ENCODE measurements at regions of chr15 and their contacts with region 1.

Region 1: GRCh38 chr15:42920519-42921227 is at the start of gene TTBK2:
- DNase-seq: peak; percentile 99
- H3K4me3 ChIP-seq: peak within 1 kb of the TSS; percentile 81
- H3K27ac ChIP-seq: peak within 1 kb of the TSS; percentile 47
- H3K4me1 ChIP-seq: peaks cover 6% of the 10 kb centered on the region
- H3K27me3 ChIP-seq: no peaks in the 10 kb centered on the region
- CTCF ChIP-seq: no peak
- total RNA-seq, gene TTBK2: 14.9 and 15.8 TPM in 2 replicates

Region 2: GRCh38 chr15:42772144-42772543 is 148.5 kb before region 1 on chr15:
- CTCF ChIA-PET with region 1: no interaction called
- POLR2A ChIA-PET with region 1: no interaction called
- intact Hi-C with region 1: no loop called
- DNase-seq: no peak
- H3K4me3 ChIP-seq: no peak overlapping the region
- H3K27ac ChIP-seq: no peak overlapping the region
- H3K4me1 ChIP-seq: no peaks in the 10 kb centered on the region
- H3K27me3 ChIP-seq: no peaks in the 10 kb centered on the region
- CTCF ChIP-seq: no peak

Region 3: DNA sequence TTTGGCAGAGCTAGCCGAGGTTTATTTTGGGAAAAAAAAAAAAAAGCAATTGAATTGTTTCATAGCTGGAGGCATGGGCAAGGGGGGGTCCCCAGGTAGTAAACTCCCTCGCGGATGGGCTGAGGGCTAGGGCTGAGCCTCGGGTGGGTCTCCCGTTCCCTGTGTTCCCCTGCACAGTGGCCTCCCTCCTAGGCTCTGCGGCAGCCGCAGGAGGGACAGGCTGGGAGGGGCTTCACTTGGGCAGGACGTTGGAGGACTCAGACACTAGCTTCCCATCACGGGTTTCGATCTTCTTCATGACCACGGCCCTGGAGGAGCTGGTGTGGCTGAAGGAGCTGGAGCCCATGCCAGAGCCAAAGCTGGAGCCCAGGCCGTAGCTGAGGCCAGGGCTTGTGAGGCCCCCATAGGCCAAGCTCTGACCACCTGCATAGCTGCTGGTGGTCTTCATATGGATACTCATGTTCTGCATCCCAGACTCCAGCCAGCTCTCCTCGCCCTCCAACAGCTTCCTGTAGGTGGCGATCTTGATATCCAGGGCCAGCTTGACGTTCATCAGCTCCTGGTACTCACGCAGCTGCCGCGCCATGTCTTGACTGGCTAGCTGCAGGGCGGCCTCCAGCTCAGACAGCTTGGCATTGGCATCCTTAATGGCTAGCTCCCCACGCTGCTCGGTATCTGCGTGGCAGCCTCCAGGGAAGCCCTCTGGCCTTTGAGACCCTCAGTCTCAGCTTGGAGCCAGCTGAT is 119.8 kb before region 1 on chr15:
- CTCF ChIA-PET with region 1: interaction called, 4 read pairs
- POLR2A ChIA-PET with region 1: no interaction called
- intact Hi-C with region 1: loop called (anchors 10 kb)
- DNase-seq: no peak
- H3K4me3 ChIP-seq: no peak overlapping the region
- H3K27ac ChIP-seq: no peak overlapping the region
- H3K4me1 ChIP-seq: no peaks in the 10 kb centered on the region
- H3K27me3 ChIP-seq: no peaks in the 10 kb centered on the region
- CTCF ChIP-seq: peak; percentile 47; the same call in 1 of the 2 replicates

Region 4: DNA sequence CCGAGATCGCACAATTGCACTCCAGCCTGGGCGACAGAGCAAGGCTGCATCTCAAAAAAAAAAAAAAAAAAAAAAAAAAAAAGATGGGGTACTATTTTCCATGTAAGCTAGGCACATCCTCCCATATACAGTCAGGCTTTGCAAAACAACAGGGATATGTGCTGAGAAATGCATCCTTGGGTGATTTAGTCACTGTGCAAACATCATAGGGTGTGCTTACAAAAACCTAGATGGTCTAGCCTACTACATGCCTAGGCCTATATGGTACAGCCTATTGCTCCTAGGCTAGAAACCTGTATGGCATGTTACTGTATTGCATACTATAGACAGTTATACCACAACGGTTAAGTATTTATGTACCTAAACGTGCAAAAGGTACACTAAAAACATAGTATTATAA is 75.1 kb before region 1 on chr15:
- CTCF ChIA-PET with region 1: no interaction called
- POLR2A ChIA-PET with region 1: no interaction called
- intact Hi-C with region 1: no loop called
- DNase-seq: no peak
- H3K4me3 ChIP-seq: no peak overlapping the region
- H3K27ac ChIP-seq: no peak overlapping the region
- H3K4me1 ChIP-seq: no peaks in the 10 kb centered on the region
- H3K27me3 ChIP-seq: no peaks in the 10 kb centered on the region
- CTCF ChIP-seq: no peak

Measured in A673 (cell line).